ENCODE measurements at regions of chr3 and their contacts with region 1.

Region 1: DNA sequence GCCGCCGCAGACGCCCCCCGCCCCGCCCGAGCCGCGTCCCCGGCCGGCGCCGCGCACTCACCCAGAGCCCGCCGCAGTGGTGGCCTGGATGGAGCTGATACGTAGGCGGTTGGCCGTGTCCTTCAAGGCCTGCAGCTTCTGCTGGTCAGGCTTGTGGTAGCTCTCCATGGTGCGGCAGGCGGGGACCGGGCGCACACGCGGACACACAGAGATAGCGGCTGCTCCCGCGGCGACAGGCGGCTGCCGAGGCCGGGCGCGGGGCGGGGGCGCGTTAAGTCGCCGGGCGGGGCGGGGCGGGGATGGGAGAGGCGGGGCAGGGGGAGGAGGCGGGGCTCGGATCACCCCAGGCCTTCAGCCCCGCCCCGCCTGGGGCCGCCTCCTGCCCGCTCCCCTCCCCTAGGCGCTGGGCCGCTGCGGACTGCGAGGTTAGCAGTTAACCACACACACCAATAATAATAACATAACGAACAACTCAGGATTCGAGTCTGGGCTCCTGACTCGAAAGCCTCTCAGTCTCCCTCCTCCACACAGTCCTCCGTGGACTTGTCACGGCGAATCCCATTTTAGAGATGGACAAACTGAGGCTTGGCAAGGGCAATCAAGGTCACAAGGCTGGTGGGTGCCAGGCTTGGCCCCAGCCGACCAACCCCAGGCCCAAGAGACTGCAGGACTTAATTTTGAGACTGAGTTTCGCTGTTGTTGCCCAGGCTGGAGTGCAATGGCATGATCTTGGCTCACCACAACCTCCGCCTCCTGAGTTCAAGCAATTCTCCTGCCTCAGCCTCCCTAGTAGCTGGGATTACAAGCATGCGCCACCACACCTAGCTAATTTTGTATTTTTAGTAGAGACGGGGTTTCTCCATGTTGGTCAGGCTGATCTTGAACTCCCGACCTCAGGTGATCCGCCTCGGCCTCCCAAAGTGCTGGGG is at the start of gene TKT:
- DNase-seq: peak; percentile 85
- H3K4me3 Mint-ChIP-seq: peak within 1 kb of the TSS; percentile 91
- H3K27ac Mint-ChIP-seq: peak within 1 kb of the TSS; percentile 80
- H3K4me1 Mint-ChIP-seq: peaks cover 36% of the 10 kb centered on the region
- H3K27me3 Mint-ChIP-seq: no peaks in the 10 kb centered on the region
- total RNA-seq, gene TKT: 316 to 322 TPM

Region 2: GRCh38 chr3:52770496-52771333 is 485.3 kb before region 1 on chr3 and contains the start of gene NEK4:
- CTCF ChIA-PET with region 1: no interaction called
- intact Hi-C with region 1: loop called (anchors 5 kb)
- DNase-seq: peak; percentile 91
- H3K4me3 Mint-ChIP-seq: peak within 1 kb of the TSS; percentile 96
- H3K27ac Mint-ChIP-seq: peak within 1 kb of the TSS; percentile 93
- H3K4me1 Mint-ChIP-seq: peaks cover 20% of the 10 kb centered on the region
- H3K27me3 Mint-ChIP-seq: no peaks in the 10 kb centered on the region
- total RNA-seq, gene NEK4: 12.8 to 15.3 TPM

Region 3: GRCh38 chr3:53130179-53131061 is 125.6 kb before region 1 on chr3 and contains the start of gene RFT1:
- CTCF ChIA-PET with region 1: no interaction called
- intact Hi-C with region 1: loop called (anchors 1 kb)
- DNase-seq: peak; percentile 99
- H3K4me3 Mint-ChIP-seq: peak within 1 kb of the TSS; percentile 87
- H3K27ac Mint-ChIP-seq: peak within 1 kb of the TSS; percentile 93
- H3K4me1 Mint-ChIP-seq: peaks cover 27% of the 10 kb centered on the region
- H3K27me3 Mint-ChIP-seq: no peaks in the 10 kb centered on the region
- total RNA-seq, gene RFT1: 29.9 to 31.7 TPM

Region 4: DNA sequence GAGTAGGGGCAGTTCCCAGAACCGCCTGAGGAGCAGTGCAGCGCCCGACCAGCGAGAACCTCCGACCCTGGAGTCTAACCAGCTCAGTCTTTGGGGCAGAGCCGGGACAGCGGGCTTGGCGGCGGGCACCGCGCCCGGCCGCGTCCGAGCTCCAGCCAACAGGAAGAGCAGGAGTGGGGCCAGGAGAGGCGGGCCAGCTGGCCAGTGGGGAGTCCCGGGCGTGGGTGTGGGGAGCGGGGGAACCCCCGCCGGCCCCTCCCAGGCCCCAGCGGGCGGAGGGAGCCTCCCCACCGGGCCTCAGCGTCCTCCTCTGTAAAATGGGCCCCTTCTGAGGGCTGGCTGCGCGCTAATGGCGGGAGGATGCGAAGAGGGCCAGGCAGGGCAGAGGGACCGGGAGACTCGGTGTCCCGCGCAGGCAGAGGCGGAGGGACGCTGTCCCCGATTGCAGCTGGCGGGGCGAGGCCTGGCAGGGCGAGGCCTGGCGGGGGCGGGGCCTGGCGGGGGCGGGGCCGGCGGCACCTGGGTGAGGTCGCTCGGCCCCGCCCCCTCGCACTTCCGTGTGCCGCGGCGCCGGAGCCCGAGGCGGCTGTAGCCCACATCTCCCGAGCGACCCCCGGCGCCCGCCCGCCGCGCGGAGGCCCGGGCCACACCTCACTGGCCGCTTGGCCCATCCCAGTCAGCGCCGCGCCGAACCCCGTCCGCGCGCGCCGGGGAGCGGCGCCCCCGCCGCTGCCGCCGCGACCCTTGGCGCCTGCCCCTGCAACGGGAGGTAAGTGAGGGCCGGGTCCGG is 95.2 kb before region 1 on chr3 and contains the start of gene PRKCD:
- CTCF ChIA-PET with region 1: no interaction called
- intact Hi-C with region 1: loop called (anchors 2 kb)
- DNase-seq: peak; percentile 76
- H3K4me3 Mint-ChIP-seq: peak within 1 kb of the TSS; percentile 74
- H3K27ac Mint-ChIP-seq: peak within 1 kb of the TSS; percentile 59
- H3K4me1 Mint-ChIP-seq: peaks cover 18% of the 10 kb centered on the region
- H3K27me3 Mint-ChIP-seq: peaks cover 18% of the 10 kb centered on the region
- total RNA-seq, gene PRKCD: 9.1 to 10.2 TPM

Region 5: GRCh38 chr3:53219895-53220483 is 36.0 kb before region 1 on chr3:
- CTCF ChIA-PET with region 1: interaction called, 6 read pairs
- intact Hi-C with region 1: loop called (anchors 2 kb)
- DNase-seq: peak; percentile 91
- H3K4me3 Mint-ChIP-seq: no peak overlapping the region
- H3K27ac Mint-ChIP-seq: no peak overlapping the region
- H3K4me1 Mint-ChIP-seq: peaks cover 1% of the 10 kb centered on the region
- H3K27me3 Mint-ChIP-seq: no peaks in the 10 kb centered on the region

Region 6: GRCh38 chr3:53236112-53236841 is 19.8 kb before region 1 on chr3:
- CTCF ChIA-PET with region 1: no interaction called
- intact Hi-C with region 1: no loop called
- DNase-seq: no peak
- H3K4me3 Mint-ChIP-seq: no peak overlapping the region
- H3K27ac Mint-ChIP-seq: peak overlapping the region; percentile 53
- H3K4me1 Mint-ChIP-seq: no peaks in the 10 kb centered on the region
- H3K27me3 Mint-ChIP-seq: no peaks in the 10 kb centered on the region

Region 7: DNA sequence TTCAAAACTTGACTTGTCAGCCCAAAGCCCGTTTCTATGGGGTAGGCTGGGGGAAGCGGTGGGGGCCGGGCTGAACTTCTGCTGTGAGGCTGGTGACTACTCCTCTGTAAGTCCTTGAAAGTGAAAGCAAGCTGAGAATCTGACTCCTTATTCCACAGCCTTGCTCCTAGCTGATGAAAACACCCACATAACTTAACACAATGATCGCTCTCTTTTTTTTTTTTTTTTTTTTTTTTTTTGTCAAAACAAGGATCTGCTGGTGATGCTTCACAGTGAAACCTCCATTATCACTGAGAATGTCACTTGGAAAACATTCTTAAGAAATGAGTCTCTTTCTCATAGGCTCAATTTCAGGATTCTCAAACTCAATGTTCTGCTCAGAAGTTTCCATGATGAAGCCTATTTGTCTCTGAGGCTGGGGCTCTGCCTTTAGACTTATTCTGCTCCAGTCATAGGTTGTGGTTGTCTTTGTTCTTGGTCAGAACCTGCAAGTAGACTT is 31.1 kb after region 1 on chr3:
- CTCF ChIA-PET with region 1: no interaction called
- intact Hi-C with region 1: loop called (anchors 2 kb)
- DNase-seq: no peak
- H3K4me3 Mint-ChIP-seq: no peak overlapping the region
- H3K27ac Mint-ChIP-seq: peak overlapping the region; percentile 51
- H3K4me1 Mint-ChIP-seq: peaks cover 9% of the 10 kb centered on the region
- H3K27me3 Mint-ChIP-seq: no peaks in the 10 kb centered on the region

Region 8: DNA sequence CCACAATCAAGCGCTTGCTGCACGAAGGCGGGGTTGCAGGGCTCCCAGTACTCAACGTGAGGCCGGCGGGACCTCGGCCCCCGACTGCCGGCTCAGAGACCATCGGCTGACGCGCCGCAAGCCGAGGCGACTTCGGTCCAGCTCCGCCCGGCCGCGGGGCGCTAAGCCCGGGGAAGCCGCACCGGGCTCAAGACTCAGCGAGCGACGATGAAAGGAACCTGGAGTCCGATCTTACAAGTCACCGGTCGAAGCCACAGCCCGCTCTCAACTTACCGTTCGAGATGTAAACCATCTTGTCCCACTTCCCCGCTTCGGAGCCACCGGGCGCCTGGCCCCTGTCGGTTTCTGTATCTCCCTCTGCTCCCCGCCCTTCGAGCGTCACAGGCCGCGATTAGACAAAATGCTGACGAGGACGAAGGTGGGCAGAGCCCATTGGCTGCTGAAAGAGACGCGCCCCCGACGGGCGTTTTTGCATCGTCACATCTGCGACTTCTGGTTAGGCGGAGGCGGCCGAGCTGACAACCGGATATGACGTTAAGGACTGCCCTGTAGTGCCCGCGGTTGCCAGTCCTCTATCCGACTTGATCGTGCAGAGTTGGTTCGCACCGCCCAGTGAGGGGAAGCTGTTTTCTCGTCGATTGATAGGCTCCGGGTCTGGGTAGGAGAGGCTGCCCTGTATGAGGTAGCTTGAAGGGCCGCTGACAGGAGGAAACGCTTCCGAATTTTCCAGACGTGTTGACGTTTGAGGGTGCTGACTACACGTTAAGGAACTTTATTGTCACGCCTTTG is 635.7 kb after region 1 on chr3 and contains the start of gene SELENOK:
- CTCF ChIA-PET with region 1: no interaction called
- intact Hi-C with region 1: loop called (anchors 5 kb)
- DNase-seq: peak; percentile 99
- H3K4me3 Mint-ChIP-seq: peak within 1 kb of the TSS; percentile 91
- H3K27ac Mint-ChIP-seq: peak within 1 kb of the TSS; percentile 96
- H3K4me1 Mint-ChIP-seq: peaks cover 47% of the 10 kb centered on the region
- H3K27me3 Mint-ChIP-seq: no peaks in the 10 kb centered on the region
- total RNA-seq, gene SELENOK: 29.6 to 36.1 TPM

Measured in activated naive CD4-positive, alpha-beta T cell treated with anti-CD3 and anti-CD28 coated beads for 36 hours (primary cell).